Heart right ventricle (tissue), 16 donors: ENCODE measurements at regions of chr12 and their contacts with region 1.

Region 1: DNA sequence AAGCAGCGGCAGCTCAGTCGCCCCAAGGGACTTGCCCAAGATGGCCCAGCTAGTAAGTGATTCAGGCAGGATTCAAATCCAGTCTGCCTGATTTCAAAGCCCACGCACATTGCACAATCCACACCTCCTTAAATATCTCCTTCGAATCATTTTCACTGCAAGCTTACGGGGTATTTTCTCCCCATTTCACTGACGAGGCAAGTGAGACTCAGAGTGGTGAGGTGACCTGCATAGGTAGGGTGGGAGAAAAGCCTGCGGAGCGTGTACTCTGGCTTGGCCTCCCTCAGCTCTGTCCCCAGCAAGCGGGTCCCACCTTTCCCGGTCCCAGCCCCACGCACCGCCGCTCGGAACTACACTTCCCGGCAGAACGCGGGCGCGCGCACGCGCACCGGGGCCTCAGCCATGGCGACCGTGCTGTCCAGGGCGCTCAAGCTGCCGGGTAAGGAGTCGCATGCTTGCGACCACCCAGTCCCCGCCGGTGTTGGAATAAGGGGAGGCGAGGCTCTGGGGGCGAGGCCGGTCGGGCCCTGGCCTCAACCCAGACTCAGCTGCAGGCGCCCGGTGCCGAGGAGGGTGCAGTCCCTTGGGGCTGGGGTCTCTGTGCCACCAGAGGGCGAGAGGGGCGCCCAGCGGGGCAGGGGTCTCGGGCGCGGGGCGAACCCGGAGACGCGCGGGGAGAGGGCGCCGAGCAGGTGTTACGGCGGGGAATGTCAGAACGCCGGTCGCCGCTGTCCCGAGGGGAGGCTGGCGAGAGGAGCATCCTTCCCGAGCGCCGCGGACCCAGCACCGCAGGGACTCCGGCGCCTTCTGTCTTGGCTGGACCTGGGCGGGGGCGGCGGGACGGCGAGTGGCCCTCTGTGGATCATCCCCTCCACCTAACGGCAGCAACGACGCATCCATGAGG is at the start of gene FAM234B:
- DNase-seq: peak; percentile 78 to 88
- ATAC-seq: peak; percentile 95 to 99 (median 98)
- H3K4me3 ChIP-seq: peak within 1 kb of the TSS; percentile 89 to 100 (median 94)
- H3K27ac ChIP-seq: peak within 1 kb of the TSS in 9 of 10 donors; percentile 50 to 85 (median 68)
- H3K4me1 ChIP-seq: peaks cover 0 to 17% (median 11%) of the 10 kb centered on the region in 9 donors
- H3K27me3 ChIP-seq: peaks cover 0 to 7% (median 0%) of the 10 kb centered on the region in 7 donors
- CTCF ChIP-seq: peak in 6 of 9 donors; percentile 11 to 44 (median 29)
- total RNA-seq, gene FAM234B: 1.4 to 3.6 (median 2.5) TPM

Region 2: DNA sequence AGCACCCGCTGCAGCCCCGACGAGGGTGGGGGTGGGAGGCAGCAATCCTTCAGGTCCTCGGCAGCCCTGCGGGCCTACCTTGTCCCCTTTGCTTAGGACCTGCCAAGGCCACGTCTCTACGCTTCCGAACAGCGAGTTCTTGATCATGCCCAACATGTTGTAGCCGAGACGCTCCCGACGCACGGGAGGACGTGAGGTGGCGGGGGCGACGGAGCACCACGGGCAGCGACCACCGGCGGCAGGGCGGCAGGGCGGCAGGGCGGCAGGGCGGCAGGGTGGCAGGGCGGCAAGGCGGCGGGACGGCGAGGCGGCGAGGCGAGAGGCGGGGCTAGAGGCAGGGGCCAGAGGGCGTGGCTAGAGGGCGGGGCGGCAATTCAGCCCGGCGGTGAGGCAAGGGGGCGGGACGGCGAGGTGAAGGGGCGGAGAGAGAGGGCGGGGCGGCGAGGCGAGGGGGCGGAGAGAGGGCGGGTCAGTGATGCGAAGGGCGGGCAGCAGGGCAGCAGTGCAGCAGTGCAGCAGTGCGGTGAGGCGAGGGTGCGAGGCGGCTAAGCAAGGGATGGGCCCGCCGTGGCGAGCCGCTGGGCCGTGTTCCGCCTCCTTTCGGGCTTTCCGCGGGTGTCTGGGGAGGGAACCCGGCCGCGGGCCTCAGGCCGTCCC is 44.2 kb before region 1 on chr12 and contains the start of gene HEBP1:
- intact Hi-C with region 1: loop called in 1 of 10 experiments (anchors 5 kb)
- DNase-seq: peak; percentile 96 to 98
- ATAC-seq: peak; percentile 96 to 99 (median 98)
- H3K4me3 ChIP-seq: peak within 1 kb of the TSS; percentile 58 to 98 (median 86)
- H3K27ac ChIP-seq: peak within 1 kb of the TSS; percentile 78 to 99 (median 92)
- H3K4me1 ChIP-seq: peaks cover 5 to 64% (median 43%) of the 10 kb centered on the region in 9 donors
- H3K27me3 ChIP-seq: no peaks in the 10 kb centered on the region
- CTCF ChIP-seq: no peak
- total RNA-seq, gene HEBP1: 45.2 to 71.4 (median 51.4) TPM